AG04450 (cell line): ENCODE measurements at regions of chr2 and their contacts with region 1.

Region 1: DNA sequence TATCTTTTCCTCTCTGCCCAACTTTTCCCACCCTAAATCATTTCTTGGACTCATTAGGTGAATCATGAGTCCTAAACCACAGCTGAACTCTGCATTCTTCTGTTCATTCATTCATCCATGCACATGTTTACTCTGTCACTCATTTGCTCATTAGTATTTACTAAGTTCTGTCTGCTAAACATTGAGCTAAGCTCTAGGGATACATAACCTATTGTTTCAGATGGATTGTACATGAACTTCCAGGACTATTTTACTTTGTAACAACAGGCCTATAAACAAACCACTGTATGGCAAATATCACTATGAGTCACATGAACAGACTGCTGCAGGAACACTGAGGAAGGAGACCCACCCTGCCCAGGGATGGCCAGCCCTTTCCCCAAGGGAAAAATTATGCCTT is 14.6 kb upstream of the DYNC2LI1 start:
- DNase-seq: no peak
- H3K4me3 ChIP-seq: no peak overlapping the region
- H3K27ac ChIP-seq: no peak overlapping the region
- H3K27me3 ChIP-seq: no peaks in the 10 kb centered on the region
- CTCF ChIP-seq: no peak

Region 2: DNA sequence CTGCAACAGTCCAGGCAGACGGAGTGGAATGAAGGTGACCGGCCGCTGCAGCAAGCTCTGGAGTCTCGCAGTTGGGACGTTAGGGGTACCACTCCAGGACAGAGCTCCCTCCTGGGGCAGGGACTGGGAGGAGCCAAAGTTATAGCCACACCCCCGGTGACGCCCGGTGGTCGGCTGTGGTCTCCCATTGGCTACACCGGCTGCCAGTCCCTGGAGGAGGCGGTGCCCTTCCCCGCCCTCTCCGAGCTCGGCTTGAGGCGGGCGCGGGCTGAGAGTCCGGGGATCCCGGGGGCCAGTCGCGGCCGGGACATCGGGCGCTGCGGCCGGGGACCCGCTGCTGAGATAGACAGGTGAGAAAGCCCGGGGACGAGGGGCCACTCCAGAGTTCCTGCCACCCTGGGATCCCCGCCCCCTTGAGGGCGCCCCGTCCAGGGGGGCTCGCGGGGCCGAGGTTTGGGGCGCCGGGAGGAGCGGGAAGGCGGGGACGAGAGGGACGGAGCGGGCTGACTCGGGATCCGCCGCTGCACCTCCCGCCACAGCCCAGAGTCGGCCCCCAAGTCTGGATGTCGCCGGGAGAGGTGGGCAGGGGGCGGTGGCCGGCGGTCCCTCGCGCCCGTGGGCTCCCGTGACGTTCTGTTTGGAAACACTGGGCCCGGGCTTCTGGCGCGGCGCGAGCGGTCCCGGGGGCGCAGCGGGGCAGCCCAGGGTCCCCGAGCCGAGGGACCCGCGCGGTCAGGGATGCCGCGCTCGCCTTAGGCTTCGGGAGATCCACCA is 122.0 kb before region 1 on chr2 and contains the start of gene PLEKHH2:
- CTCF ChIA-PET with region 1: no interaction called
- POLR2A ChIA-PET with region 1: no interaction called
- DNase-seq: peak; percentile 51
- H3K4me3 ChIP-seq: peak within 1 kb of the TSS; percentile 68
- H3K27ac ChIP-seq: no peak within 1 kb of the TSS
- H3K27me3 ChIP-seq: no peaks in the 10 kb centered on the region
- CTCF ChIP-seq: no peak
- polyA plus RNA-seq, gene PLEKHH2: 4.5 and 6.0 TPM in 2 replicates

Region 3: DNA sequence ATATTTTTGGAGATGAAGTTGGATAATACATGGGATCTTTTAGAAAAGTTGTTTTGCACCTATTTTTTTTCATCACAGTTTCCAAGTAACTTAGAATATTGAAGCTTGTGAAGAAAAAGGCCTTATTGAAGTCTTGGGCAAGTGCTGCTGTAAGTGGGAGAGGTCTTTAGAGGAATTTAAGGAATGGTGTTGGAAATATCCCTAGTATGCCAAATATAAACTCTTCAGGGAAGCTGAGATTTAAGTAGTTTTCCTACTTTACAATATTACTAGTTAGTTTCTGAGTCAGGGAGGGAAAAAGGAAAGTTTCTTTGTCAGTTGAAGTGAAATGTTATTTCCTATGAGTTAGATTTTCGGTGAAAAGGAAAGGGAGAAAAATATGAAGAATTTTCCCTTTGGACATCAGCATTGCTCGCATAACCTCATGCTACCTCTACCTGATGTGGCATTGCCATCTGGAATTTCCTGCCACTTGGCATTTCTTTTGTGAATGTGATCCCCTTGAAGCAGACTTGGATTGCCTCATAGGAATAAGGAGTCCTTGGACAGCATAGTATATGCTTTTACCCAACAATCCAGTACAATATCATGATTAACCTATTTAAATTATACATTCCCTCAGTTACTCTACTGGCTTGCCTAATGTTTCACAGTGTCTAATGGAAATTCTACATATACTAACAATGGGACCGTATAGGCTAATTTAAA is 110.0 kb before region 1 on chr2:
- CTCF ChIA-PET with region 1: interaction called, 11 read pairs
- POLR2A ChIA-PET with region 1: no interaction called
- DNase-seq: peak; percentile 21
- H3K4me3 ChIP-seq: no peak overlapping the region
- H3K27ac ChIP-seq: no peak overlapping the region
- H3K27me3 ChIP-seq: no peaks in the 10 kb centered on the region
- CTCF ChIP-seq: no peak

Region 4: DNA sequence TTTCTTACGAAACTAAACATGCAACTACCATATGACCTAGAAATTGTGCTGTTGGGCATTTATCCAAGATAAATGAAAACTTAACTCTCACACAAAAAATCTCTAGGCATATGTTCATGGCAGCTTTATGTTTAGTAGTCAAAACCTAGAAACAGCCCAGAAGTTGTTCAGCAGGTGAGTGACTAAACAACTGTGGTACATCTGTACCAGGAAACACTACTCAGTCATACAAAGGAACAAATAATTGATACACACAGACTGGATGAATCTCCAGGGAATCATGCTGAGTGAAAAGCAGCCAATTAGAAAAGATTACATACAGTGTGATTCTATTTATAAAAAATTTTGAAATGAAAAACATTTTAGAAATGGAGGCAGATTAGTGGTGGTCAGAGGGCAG is 43.9 kb after region 1 on chr2:
- CTCF ChIA-PET with region 1: no interaction called
- POLR2A ChIA-PET with region 1: no interaction called
- DNase-seq: no peak
- H3K4me3 ChIP-seq: no peak overlapping the region
- H3K27ac ChIP-seq: no peak overlapping the region
- H3K27me3 ChIP-seq: no peaks in the 10 kb centered on the region
- CTCF ChIP-seq: no peak